ENCODE measurements at regions of chr10 and their contacts with region 1.

Region 1: GRCh38 chr10:78281627-78282026 is 248.0 kb downstream of the RPS24 start:
- DNase-seq: no peak
- H3K4me3 ChIP-seq: no peak overlapping the region
- H3K27ac ChIP-seq: no peak overlapping the region
- H3K4me1 ChIP-seq: no peaks in the 10 kb centered on the region
- H3K27me3 ChIP-seq: no peaks in the 10 kb centered on the region
- CTCF ChIP-seq: no peak
- POLR2A ChIP-seq: no peak

Region 2: DNA sequence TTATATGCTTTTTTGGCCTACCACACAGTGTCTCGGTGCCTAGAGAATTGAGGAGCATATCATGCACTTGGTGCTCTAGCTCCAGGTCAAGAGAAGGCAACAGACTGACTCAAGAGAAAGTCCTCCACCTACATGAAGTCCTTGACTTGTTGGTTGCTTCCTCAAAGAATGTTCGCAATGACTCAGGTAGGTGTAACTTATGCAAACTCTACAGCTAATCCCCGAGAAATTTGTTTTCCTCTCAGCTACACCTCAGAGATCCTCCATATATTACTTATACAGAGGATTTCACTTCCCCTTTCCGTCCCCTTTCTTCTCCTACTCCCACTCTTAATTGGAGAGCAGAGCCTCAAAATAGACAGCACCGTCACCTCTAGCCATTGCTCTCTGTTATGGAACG is 1657.2 kb before region 1 on chr10:
- intact Hi-C with region 1: no loop called
- DNase-seq: no peak
- H3K4me3 ChIP-seq: no peak overlapping the region
- H3K27ac ChIP-seq: no peak overlapping the region
- H3K4me1 ChIP-seq: no peaks in the 10 kb centered on the region
- H3K27me3 ChIP-seq: no peaks in the 10 kb centered on the region
- CTCF ChIP-seq: no peak
- POLR2A ChIP-seq: no peak

Region 3: GRCh38 chr10:78319371-78319770 is 37.7 kb after region 1 on chr10:
- intact Hi-C with region 1: loop called (anchors 1 kb)
- DNase-seq: no peak
- H3K4me3 ChIP-seq: no peak overlapping the region
- H3K27ac ChIP-seq: no peak overlapping the region
- H3K4me1 ChIP-seq: peaks cover 0 to 3% of the 10 kb centered on the region in 2 donors
- H3K27me3 ChIP-seq: no peaks in the 10 kb centered on the region
- CTCF ChIP-seq: no peak
- POLR2A ChIP-seq: no peak

Measured in breast epithelium (tissue), 4 donors.